Endothelial cell of umbilical vein (primary cell): ENCODE measurements at regions of chr1 and their contacts with region 1.

Region 1: DNA sequence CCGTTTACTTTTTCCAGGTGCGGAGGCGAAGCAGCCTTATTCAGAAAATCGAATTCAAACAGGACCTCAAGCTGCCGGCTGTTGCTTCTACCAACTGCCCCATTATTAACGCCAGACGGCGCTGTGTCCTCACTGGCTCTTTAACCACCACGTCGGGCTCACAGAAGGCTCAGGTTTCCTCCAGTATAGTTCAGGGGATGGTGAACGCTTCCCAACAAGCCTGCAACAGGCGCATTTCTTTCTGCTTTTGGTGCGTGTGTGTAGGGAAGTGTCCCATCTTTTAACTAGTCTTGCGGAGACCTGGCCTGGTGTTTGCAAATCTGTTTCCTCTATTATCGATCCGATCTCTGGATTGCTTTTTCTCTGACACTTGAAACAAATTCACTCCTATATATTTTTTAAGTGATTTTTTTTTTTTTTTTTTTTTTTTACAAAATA is 791 bp upstream of the STUM start:
- DNase-seq: peak; percentile 85
- H3K4me3 ChIP-seq: no peak overlapping the region
- H3K27ac ChIP-seq: no peak overlapping the region
- H3K4me1 ChIP-seq: peaks cover 2% of the 10 kb centered on the region
- H3K27me3 ChIP-seq: peaks cover 46 to 63% of the 10 kb centered on the region in 2 experiments
- CTCF ChIP-seq: peak; percentile 86 to 93
- POLR2A ChIP-seq: no peak

Region 2: DNA sequence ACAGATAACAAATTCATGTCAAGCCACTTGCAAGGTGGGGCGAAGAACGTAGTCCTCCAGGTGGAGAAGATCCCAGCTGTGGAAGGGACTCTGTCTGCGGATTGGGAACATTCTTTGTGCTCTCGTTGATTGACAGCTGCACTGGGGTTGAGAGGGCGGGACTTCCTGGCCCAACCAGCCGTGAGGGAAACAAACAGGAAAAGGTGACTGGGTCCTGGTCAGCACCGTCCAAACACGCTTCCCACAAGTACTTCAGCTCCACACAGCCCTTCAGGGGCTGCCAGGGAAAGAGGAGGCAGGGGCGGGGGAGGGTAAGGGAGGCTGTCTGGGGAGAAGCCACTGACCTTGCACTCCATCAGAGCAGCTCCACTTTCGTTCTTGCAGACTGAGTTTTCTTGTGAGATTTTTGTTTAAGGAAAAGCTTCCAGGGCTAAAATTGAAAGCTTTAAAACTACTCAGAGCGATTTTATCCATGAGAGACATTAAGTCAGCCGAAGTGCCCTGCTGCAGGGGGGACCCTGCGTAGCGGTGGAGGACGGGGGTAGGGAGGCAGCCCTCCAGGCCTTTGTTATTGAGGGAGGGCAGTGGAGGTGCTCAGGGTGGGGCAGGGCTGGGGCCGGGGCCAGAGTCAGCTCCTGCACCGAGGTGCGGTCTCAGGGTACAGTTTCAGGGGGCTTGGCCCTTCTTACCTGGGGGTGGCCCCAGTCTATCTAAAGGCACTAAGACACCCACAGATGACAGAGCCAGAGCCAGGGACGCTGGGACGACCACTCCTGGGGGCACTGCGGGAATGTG is 20.8 kb before region 1 on chr1:
- CTCF ChIA-PET with region 1: interaction called, 13 read pairs
- POLR2A ChIA-PET with region 1: no interaction called
- dilution Hi-C with region 1: no loop called
- intact Hi-C with region 1: no loop called
- DNase-seq: peak; percentile 73
- H3K4me3 ChIP-seq: peak overlapping the region in 1 of 3 experiments; percentile 9
- H3K27ac ChIP-seq: no peak overlapping the region
- H3K4me1 ChIP-seq: no peaks in the 10 kb centered on the region
- H3K27me3 ChIP-seq: peaks cover 0 to 3% of the 10 kb centered on the region in 2 experiments
- CTCF ChIP-seq: no peak
- POLR2A ChIP-seq: no peak

Region 3: GRCh38 chr1:226532553-226532952 is 15.2 kb before region 1 on chr1:
- CTCF ChIA-PET with region 1: interaction called, 21 read pairs
- POLR2A ChIA-PET with region 1: no interaction called
- dilution Hi-C with region 1: no loop called
- intact Hi-C with region 1: no loop called
- DNase-seq: no peak
- H3K4me3 ChIP-seq: no peak overlapping the region
- H3K27ac ChIP-seq: no peak overlapping the region
- H3K4me1 ChIP-seq: no peaks in the 10 kb centered on the region
- H3K27me3 ChIP-seq: peaks cover 0 to 5% of the 10 kb centered on the region in 2 experiments
- CTCF ChIP-seq: no peak
- POLR2A ChIP-seq: no peak

Region 4: GRCh38 chr1:226569879-226570547 is 22.2 kb after region 1 on chr1:
- CTCF ChIA-PET with region 1: interaction called, 10 read pairs
- POLR2A ChIA-PET with region 1: no interaction called
- dilution Hi-C with region 1: no loop called
- intact Hi-C with region 1: no loop called
- DNase-seq: no peak
- H3K4me3 ChIP-seq: no peak overlapping the region
- H3K27ac ChIP-seq: no peak overlapping the region
- H3K4me1 ChIP-seq: no peaks in the 10 kb centered on the region
- H3K27me3 ChIP-seq: peaks cover 3 to 5% of the 10 kb centered on the region in 2 experiments
- CTCF ChIP-seq: peak; percentile 17 to 36
- POLR2A ChIP-seq: no peak

Region 5: GRCh38 chr1:226608699-226609505 is 61.1 kb after region 1 on chr1:
- CTCF ChIA-PET with region 1: interaction called, 57 read pairs
- POLR2A ChIA-PET with region 1: no interaction called
- dilution Hi-C with region 1: no loop called
- intact Hi-C with region 1: loop called (anchors 1 kb)
- DNase-seq: peak; percentile 58
- H3K4me3 ChIP-seq: no peak overlapping the region
- H3K27ac ChIP-seq: no peak overlapping the region
- H3K4me1 ChIP-seq: no peaks in the 10 kb centered on the region
- H3K27me3 ChIP-seq: no peaks in the 10 kb centered on the region
- CTCF ChIP-seq: peak; percentile 85 to 89
- POLR2A ChIP-seq: no peak

Region 6: DNA sequence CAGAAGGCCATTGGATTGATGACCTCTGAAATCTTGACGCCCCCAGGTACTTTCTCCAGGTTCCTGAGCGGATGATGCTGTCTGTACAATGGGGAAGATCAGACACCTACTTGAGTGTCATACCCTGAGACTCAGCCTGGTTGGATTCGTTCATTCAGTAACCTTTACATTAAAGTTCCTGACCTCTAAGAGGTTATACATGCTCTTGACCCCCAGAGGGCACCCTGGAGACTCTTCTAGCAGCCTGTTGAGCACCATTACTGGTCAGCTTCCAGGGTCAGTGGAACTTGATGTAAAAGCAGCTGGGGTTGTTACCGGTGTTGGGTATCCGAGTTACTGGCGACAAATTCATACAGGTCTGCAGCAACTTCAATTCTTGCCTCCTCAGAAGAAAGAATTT is 901.3 kb after region 1 on chr1:
- CTCF ChIA-PET with region 1: interaction called, 14 read pairs
- POLR2A ChIA-PET with region 1: no interaction called
- dilution Hi-C with region 1: no loop called
- intact Hi-C with region 1: loop called (anchors 5 kb)
- DNase-seq: no peak
- H3K4me3 ChIP-seq: no peak overlapping the region
- H3K27ac ChIP-seq: no peak overlapping the region
- H3K4me1 ChIP-seq: peaks cover 2% of the 10 kb centered on the region
- H3K27me3 ChIP-seq: peaks cover 3 to 6% of the 10 kb centered on the region in 2 experiments
- CTCF ChIP-seq: peak; percentile 29 to 37
- POLR2A ChIP-seq: no peak